Activated T-helper 2 cell treated with anti-CD3 and anti-CD28 coated beads, Interferon-gamma antibody, Interleukin-2, Interleukin-4, amounts not matched to agents 10 μg/mL and 5 μg/mL and 100 μg/mL, durations not matched to agents 14 hours and 24 hours and 36 hours (primary cell): ENCODE measurements at regions of chr2 and their contacts with region 1.

Region 1: GRCh38 chr2:226799181-226799975 is at the start of gene IRS1:
- DNase-seq: peak; percentile 47
- H3K4me3 Mint-ChIP-seq: peak within 1 kb of the TSS; percentile 81
- H3K27ac Mint-ChIP-seq: no peak within 1 kb of the TSS
- H3K4me1 Mint-ChIP-seq: peaks cover 15% of the 10 kb centered on the region
- H3K27me3 Mint-ChIP-seq: peaks cover 9% of the 10 kb centered on the region
- total RNA-seq, gene IRS1: 1.9 and 3.1 TPM in 2 replicates

Region 2: DNA sequence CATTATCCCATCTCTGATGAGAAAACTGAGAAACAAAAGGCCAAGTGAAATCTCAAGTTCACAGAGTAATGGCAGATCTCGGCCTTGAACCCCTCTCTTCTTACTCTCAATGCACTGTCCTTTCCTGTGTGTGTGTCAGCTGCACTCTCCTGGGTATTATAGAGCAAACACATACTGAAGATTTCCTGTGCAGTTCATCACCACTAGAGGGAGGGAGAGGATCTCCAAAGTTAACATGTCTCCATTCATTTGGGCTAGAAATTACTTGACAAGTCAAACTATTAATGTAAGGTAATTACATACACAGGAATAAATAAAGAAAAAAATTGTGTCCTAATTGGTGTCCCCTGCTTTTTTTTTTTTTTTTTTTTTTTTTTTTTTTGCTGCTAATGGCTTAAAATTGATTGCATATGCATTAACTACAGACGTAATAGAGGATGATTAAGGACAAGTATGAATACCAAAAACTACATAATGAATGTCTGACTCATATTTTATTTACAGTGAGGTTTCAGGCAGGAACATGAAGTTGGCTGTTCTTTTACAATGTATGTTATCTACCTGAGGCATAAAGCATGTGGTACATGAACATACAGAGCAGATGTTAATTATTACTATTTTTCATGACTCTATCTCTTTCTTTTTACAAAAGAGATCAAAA is 1130.6 kb before region 1 on chr2:
- intact Hi-C with region 1: loop called (anchors 1 kb)
- DNase-seq: no peak
- H3K4me3 Mint-ChIP-seq: no peak overlapping the region
- H3K27ac Mint-ChIP-seq: no peak overlapping the region
- H3K4me1 Mint-ChIP-seq: no peaks in the 10 kb centered on the region
- H3K27me3 Mint-ChIP-seq: peaks cover 5% of the 10 kb centered on the region

Region 3: DNA sequence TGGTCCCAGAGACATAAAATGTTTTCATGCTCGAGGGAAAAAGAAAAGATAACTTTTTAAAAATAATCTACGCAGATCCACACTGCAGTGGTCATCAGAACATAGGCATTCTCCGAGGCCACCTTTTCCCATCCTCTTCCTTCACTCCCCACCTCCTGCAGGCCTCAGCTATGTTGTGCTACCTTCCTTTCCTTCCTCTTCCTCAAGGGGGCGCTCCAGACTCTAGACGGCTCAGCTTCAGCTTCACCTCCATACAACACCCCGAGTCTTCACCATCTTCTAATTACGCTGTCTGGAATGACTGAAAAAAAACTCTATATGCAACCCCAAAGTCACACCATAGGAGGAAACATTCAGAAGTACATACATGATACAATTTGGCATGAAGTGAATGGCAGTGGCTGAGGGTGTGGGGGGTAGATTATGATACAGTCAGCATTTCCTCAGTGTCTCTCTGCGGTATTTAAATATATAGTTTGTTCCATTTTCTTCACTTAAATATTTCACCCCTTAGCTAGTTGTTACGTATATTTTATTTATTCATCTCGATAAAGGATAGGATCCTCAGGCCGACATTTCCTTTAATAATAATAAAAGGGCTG is 583.4 kb before region 1 on chr2:
- intact Hi-C with region 1: loop called (anchors 1 kb)
- DNase-seq: peak; percentile 26
- H3K4me3 Mint-ChIP-seq: no peak overlapping the region
- H3K27ac Mint-ChIP-seq: no peak overlapping the region
- H3K4me1 Mint-ChIP-seq: no peaks in the 10 kb centered on the region
- H3K27me3 Mint-ChIP-seq: peaks cover 2% of the 10 kb centered on the region

Region 4: DNA sequence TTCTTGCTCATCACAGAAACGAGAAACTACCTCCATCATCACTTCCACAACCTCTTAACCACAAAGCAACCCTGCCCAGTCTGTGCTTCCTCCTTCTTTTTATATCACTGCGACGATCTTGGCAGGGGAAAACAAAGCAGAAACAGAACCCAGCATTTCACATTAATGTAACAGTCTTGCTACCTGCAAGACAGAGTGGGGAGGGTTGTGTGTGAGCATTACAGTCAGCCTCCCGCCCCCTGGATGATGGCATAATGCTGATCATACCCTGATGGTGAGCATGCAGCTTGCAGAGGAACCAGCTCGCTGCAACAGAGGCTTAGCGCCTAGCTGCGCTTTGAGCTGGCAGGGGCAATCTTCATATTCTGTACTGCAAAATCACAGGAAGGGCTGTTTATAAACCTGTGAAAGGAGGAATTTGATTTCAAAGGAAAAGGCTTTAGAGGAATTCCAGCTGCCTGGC is 375.8 kb before region 1 on chr2:
- intact Hi-C with region 1: loop called (anchors 5 kb)
- DNase-seq: peak; percentile 40
- H3K4me3 Mint-ChIP-seq: no peak overlapping the region
- H3K27ac Mint-ChIP-seq: no peak overlapping the region
- H3K4me1 Mint-ChIP-seq: peaks cover 12% of the 10 kb centered on the region
- H3K27me3 Mint-ChIP-seq: peaks cover 22% of the 10 kb centered on the region

Region 5: DNA sequence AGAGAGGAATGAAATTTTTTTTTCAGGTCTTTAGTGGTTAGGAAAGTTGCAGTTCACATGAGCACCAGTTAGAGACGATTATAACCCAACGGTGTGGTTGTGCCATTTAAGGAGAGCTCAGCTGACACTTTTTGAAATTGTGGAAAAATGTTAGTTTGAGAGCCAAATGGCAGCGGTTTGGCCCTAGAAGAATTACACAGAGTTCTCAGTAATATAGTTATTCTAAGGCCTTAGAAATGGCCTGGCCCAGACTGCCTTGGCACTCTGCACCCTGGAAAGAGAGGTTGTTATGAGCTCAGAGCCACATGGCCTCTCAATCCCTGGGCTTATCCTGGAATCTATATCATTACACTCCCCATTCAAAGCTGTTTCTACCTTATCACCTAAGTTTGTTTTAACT is 153.8 kb after region 1 on chr2:
- intact Hi-C with region 1: no loop called
- DNase-seq: no peak
- H3K4me3 Mint-ChIP-seq: no peak overlapping the region
- H3K27ac Mint-ChIP-seq: no peak overlapping the region
- H3K4me1 Mint-ChIP-seq: peaks cover 6% of the 10 kb centered on the region
- H3K27me3 Mint-ChIP-seq: no peaks in the 10 kb centered on the region

Region 6: GRCh38 chr2:226984750-226985582 is 185.6 kb after region 1 on chr2:
- intact Hi-C with region 1: loop called (anchors 2 kb)
- DNase-seq: peak; percentile 30
- H3K4me3 Mint-ChIP-seq: no peak overlapping the region
- H3K27ac Mint-ChIP-seq: no peak overlapping the region
- H3K4me1 Mint-ChIP-seq: peaks cover 23% of the 10 kb centered on the region
- H3K27me3 Mint-ChIP-seq: no peaks in the 10 kb centered on the region